Activated T-helper 1 cell treated with anti-CD3 and anti-CD28 coated beads, Interleukin-12 subunit alpha, Interleukin-12 subunit beta, Interleukin-2, Interleukin-4 antibody, amounts not matched to agents 30 ng/mL and 10 ng/mL and 1 ng/mL, durations not matched to agents 14 hours and 24 hours and 36 hours (primary cell): ENCODE measurements at regions of chr12 and their contacts with region 1.

Region 1: GRCh38 chr12:68119724-68120211 is 39.8 kb downstream of the IFNG start:
- DNase-seq: peak; percentile 74
- H3K4me3 Mint-ChIP-seq: peak overlapping the region; percentile 15
- H3K27ac Mint-ChIP-seq: no peak overlapping the region
- H3K4me1 Mint-ChIP-seq: peaks cover 48% of the 10 kb centered on the region
- H3K27me3 Mint-ChIP-seq: no peaks in the 10 kb centered on the region

Region 2: GRCh38 chr12:67355578-67356379 is 764.0 kb before region 1 on chr12:
- intact Hi-C with region 1: loop called (anchors 1 kb)
- DNase-seq: no peak
- H3K4me3 Mint-ChIP-seq: no peak overlapping the region
- H3K27ac Mint-ChIP-seq: no peak overlapping the region
- H3K4me1 Mint-ChIP-seq: peaks cover 23% of the 10 kb centered on the region
- H3K27me3 Mint-ChIP-seq: no peaks in the 10 kb centered on the region

Region 3: GRCh38 chr12:67804168-67804567 is 315.6 kb before region 1 on chr12:
- intact Hi-C with region 1: loop called (anchors 10 kb)
- DNase-seq: peak; percentile 22
- H3K4me3 Mint-ChIP-seq: no peak overlapping the region
- H3K27ac Mint-ChIP-seq: no peak overlapping the region
- H3K4me1 Mint-ChIP-seq: peaks cover 13% of the 10 kb centered on the region
- H3K27me3 Mint-ChIP-seq: peaks cover 4% of the 10 kb centered on the region

Region 4: GRCh38 chr12:68012712-68013111 is 107.1 kb before region 1 on chr12:
- intact Hi-C with region 1: no loop called
- DNase-seq: no peak
- H3K4me3 Mint-ChIP-seq: no peak overlapping the region
- H3K27ac Mint-ChIP-seq: peak overlapping the region; percentile 76
- H3K4me1 Mint-ChIP-seq: peaks cover 40% of the 10 kb centered on the region
- H3K27me3 Mint-ChIP-seq: no peaks in the 10 kb centered on the region

Region 5: DNA sequence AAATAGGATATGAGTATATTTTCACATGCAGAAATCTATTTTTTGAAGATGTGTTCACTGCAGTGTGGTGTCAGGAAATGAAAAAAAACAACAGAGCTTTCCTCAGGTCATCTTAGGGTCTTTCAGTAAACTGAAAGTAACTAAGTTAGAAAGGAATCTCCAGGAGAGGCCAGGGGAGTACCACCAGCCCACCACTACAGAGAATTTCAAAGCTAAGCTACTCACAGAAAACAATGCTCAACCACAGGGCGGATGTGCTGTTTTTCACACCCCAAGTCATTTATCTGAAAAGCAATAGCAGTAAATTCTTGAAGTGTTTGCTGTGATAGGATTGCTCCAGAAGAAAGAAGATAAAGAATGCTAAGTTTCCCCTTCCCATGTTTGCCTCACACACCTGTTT is 39.2 kb before region 1 on chr12:
- intact Hi-C with region 1: loop called (anchors 1 kb)
- DNase-seq: peak; percentile 57
- H3K4me3 Mint-ChIP-seq: peak overlapping the region; percentile 2
- H3K27ac Mint-ChIP-seq: peak overlapping the region; percentile 80
- H3K4me1 Mint-ChIP-seq: peaks cover 57% of the 10 kb centered on the region
- H3K27me3 Mint-ChIP-seq: no peaks in the 10 kb centered on the region

Region 6: GRCh38 chr12:68163560-68164081 is 43.9 kb after region 1 on chr12:
- intact Hi-C with region 1: loop called (anchors 1 kb)
- DNase-seq: peak; percentile 34
- H3K4me3 Mint-ChIP-seq: peak overlapping the region; percentile 61
- H3K27ac Mint-ChIP-seq: peak overlapping the region; percentile 78
- H3K4me1 Mint-ChIP-seq: peaks cover 71% of the 10 kb centered on the region
- H3K27me3 Mint-ChIP-seq: no peaks in the 10 kb centered on the region

Region 7: DNA sequence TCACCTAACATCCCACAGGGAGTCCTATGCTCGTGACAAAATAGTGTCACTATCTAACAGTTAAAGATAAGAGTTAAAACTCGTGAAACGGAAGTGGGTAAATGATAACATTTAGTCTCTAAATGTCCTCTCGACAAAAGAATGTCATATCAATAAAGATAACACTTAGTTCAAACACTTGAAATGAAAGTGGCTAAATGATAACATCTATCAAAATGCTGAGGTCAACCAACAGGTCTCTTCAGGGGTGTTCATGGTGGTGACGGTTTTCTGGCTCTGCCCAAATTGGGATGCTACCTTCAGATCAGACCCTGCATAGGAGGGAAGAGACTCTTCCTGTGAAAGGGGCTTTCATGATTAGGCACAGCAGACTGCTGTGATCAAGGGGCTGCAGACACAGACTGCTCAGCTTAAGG is 83.7 kb after region 1 on chr12:
- intact Hi-C with region 1: loop called (anchors 2 kb)
- DNase-seq: no peak
- H3K4me3 Mint-ChIP-seq: no peak overlapping the region
- H3K27ac Mint-ChIP-seq: peak overlapping the region; percentile 19
- H3K4me1 Mint-ChIP-seq: peaks cover 75% of the 10 kb centered on the region
- H3K27me3 Mint-ChIP-seq: no peaks in the 10 kb centered on the region

Region 8: DNA sequence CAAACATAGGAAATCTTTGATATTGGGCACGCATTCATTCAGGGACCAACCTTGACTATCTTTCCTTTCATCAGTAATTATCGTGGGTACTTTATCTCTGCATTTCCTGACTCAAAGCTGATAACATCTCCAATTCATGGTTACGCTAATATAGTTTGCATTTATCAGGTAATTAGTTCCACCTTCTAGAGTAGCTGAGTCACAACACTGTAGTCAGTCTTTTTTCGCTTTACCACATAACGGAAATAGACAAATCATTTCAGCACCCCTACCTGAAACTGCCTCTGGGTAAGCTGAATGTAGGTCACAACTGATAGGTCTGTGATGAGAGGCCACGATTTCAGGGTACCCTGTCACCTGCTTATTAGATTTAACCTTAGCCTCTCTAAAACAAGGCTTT is 170.4 kb after region 1 on chr12:
- intact Hi-C with region 1: loop called (anchors 1 kb)
- DNase-seq: peak; percentile 45
- H3K4me3 Mint-ChIP-seq: peak overlapping the region; percentile 15
- H3K27ac Mint-ChIP-seq: peak overlapping the region; percentile 59
- H3K4me1 Mint-ChIP-seq: peaks cover 75% of the 10 kb centered on the region
- H3K27me3 Mint-ChIP-seq: peaks cover 3% of the 10 kb centered on the region